ENCODE measurements at regions of chr2 and their contacts with region 1.

Region 1: DNA sequence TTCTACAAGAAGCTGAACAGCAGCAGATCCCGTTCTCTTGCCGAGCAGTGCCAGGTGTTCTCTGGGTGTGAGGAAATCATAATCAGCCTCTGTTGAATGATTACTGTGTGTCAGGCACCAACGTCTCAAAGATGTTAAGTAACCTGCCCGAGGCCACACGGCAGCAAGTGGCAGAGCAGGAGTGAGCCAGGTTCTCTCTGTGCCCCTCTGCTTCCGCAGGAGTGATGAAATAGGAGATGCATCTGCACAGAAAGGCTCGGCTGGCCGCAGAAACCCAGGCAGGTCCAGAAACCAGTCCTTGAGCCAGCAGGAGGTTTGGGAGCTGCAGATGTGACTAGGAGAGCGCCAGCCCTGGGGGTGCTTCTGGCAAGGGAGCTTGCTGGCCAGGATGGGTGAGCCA is 68.4 kb downstream of the COPS7B start:
- DNase-seq: no peak
- H3K4me3 ChIP-seq: no peak overlapping the region
- CTCF ChIP-seq: no peak

Region 2: GRCh38 chr2:231621129-231621879 is 233.4 kb before region 1 on chr2:
- CTCF ChIA-PET with region 1: no interaction called
- POLR2A ChIA-PET with region 1: no interaction called
- DNase-seq: no peak
- H3K4me3 ChIP-seq: no peak overlapping the region
- CTCF ChIP-seq: no peak

Region 3: DNA sequence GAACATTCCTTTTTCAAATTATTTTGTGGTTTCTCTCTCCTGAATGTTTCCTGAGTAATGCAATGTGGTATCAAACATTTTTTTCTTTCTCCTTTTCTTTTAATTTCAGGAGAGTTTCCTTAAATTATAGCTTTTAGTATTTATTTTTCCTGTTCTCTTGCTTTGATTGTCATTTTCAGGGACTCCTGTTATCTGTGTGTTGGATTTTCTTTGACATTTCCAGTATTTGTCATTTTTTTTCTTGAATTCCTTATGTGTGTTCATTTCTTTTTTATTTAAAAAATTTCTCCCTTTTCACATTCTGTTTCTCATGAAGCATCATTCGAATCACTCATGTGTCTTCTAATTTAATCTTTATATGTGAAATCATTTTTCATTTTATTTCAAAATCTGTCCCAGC is 10.6 kb after region 1 on chr2:
- CTCF ChIA-PET with region 1: interaction called, 17 read pairs
- POLR2A ChIA-PET with region 1: no interaction called
- DNase-seq: no peak
- H3K4me3 ChIP-seq: no peak overlapping the region
- CTCF ChIP-seq: no peak